Naive thymus-derived CD4-positive, alpha-beta T cell (primary cell): ENCODE measurements at regions of chr1 and their contacts with region 1.

Region 1: DNA sequence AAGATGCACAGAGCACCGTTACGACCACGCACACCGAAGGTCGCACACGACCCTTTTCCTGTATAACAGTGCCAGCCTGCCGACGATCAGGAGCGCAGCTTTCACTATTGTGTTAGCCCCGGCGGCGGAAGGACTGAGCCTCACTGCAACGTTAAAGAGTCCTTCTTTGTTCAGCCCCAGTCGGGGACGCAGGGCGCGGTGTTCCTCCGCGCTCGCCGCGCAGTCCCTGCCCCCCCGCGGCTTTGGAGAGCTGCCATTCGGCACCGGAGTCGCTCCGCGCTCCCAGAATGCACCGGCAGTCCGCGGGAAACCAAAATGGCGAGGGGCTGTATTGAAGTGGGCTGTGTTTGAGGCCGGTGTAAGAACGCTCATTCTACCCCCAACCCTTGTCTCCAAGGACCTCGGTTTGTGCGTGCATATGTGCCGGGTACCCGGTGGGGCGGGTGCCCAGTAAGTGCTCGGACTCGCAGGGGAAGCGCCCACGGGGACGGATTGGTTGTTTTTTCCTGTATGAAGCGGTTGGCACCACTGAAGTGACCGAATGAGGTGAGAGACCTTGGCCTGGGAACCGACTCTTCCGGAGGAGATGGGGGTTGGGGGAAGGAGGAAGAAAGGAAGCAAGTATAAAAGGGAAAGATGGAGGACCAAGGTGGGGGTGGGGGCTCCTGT is at the start of gene MTF2:
- DNase-seq: peak; percentile 84 to 92 (median 90)
- ATAC-seq: peak; percentile 96
- H3K4me3 ChIP-seq: peak within 1 kb of the TSS; percentile 88
- H3K4me3 Mint-ChIP-seq: peak within 1 kb of the TSS; percentile 94 to 99 (median 97)
- H3K27ac ChIP-seq: peak within 1 kb of the TSS; percentile 93
- H3K27ac Mint-ChIP-seq: peak within 1 kb of the TSS; percentile 88 to 99 (median 94)
- H3K4me1 ChIP-seq: peaks cover 10 to 22% of the 10 kb centered on the region in 2 donors
- H3K4me1 Mint-ChIP-seq: peaks cover 34 to 58% (median 50%) of the 10 kb centered on the region in 7 donors
- H3K27me3 ChIP-seq: no peaks in the 10 kb centered on the region
- H3K27me3 Mint-ChIP-seq: no peaks in the 10 kb centered on the region
- total RNA-seq, gene MTF2: 35.3 to 63.1 (median 47.1) TPM

Region 2: GRCh38 chr1:92831762-92832536 is 247.2 kb before region 1 on chr1 and contains the start of gene RPL5:
- CTCF ChIA-PET with region 1: no interaction called
- POLR2A ChIA-PET with region 1: interaction called, 7 read pairs
- intact Hi-C with region 1: loop called in 1 of 2 experiments (anchors 2 kb)
- DNase-seq: peak; percentile 94 to 99 (median 98)
- ATAC-seq: peak; percentile 95
- H3K4me3 ChIP-seq: peak within 1 kb of the TSS; percentile 94
- H3K4me3 Mint-ChIP-seq: peak within 1 kb of the TSS; percentile 94 to 100 (median 98)
- H3K27ac ChIP-seq: peak within 1 kb of the TSS; percentile 94
- H3K27ac Mint-ChIP-seq: peak within 1 kb of the TSS; percentile 98 to 100 (median 99)
- H3K4me1 ChIP-seq: peaks cover 16 to 30% of the 10 kb centered on the region in 2 donors
- H3K4me1 Mint-ChIP-seq: peaks cover 29 to 54% (median 44%) of the 10 kb centered on the region in 7 donors
- H3K27me3 ChIP-seq: no peaks in the 10 kb centered on the region
- H3K27me3 Mint-ChIP-seq: peaks cover 0 to 5% (median 0%) of the 10 kb centered on the region in 5 donors
- total RNA-seq, gene RPL5: 764 to 1,693 (median 1,596) TPM

Region 3: DNA sequence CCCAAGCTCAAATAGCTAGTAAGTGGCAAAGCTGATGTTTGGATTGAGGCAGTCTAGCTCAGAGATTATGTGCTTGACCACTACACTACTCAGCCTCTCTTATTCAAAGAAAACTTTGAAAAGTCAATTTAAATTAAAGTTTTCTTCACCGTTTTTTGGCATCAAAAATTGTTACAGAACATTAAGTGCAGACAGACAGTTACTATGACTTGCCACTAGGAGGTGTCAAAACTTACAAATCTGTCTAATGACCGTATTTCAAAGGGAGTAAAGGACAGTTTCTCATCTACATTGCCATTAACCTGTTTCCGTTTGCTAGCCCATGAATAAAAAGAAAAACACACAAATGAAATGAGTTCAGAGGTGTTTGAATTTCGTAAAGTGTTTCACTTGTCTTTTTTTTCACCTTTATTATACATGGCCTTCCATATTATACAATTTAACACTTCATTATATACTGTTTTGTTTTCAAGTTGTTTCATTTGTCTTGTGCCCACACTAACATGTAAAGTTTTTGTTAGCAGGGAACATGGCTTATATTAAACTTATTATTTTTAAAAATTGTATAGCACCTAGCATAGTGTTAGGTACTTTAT is 57.5 kb before region 1 on chr1:
- CTCF ChIA-PET with region 1: interaction called, 3 read pairs
- POLR2A ChIA-PET with region 1: no interaction called
- intact Hi-C with region 1: loop called (anchors 1 kb)
- DNase-seq: peak in 7 of 9 donors; percentile 16 to 64 (median 55)
- ATAC-seq: peak; percentile 78
- H3K4me3 ChIP-seq: no peak overlapping the region
- H3K4me3 Mint-ChIP-seq: no peak overlapping the region
- H3K27ac ChIP-seq: no peak overlapping the region
- H3K27ac Mint-ChIP-seq: no peak overlapping the region
- H3K4me1 ChIP-seq: peaks cover 0 to 4% of the 10 kb centered on the region in 2 donors
- H3K4me1 Mint-ChIP-seq: peaks cover 0 to 7% (median 5%) of the 10 kb centered on the region in 7 donors
- H3K27me3 ChIP-seq: no peaks in the 10 kb centered on the region
- H3K27me3 Mint-ChIP-seq: peaks cover 0 to 48% (median 3%) of the 10 kb centered on the region in 5 donors

Region 4: DNA sequence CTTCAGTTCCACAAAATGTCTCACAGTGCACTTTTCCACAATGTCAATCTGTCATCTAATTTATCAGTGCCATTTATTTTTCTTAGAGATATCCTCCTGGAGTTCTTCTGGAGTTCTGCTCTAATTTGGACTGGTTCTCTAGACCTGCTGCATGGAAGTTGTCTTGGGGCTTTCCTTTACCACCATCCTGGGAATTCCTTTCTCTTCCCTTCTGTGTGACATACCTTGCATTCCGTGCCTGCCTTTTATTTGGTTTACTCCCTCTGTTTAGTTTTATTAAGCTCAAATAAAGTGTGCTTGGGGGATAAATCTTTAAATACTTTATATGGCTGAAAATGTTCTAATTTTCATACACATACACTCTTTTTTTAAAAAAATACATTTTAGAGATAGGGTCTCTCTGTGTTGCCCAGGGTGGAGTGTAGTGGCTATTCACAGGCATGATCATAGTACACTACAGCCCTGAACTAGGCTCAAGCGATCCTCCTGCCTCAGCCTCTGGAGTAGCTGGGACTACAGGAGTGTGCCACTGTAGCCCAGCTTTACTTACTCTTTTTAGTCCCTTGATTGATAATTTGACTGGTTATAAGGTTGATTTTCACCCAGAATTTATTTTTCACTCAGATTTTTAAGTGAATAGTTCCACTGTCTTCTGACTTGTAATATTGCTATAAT is 14.3 kb after region 1 on chr1:
- CTCF ChIA-PET with region 1: interaction called, 4 read pairs
- POLR2A ChIA-PET with region 1: interaction called, 3 read pairs
- intact Hi-C with region 1: loop called in 1 of 2 experiments (anchors 1 kb)
- DNase-seq: no peak
- ATAC-seq: no peak
- H3K4me3 ChIP-seq: no peak overlapping the region
- H3K4me3 Mint-ChIP-seq: peak overlapping the region in 8 of 10 donors; percentile 23 to 51 (median 33)
- H3K27ac ChIP-seq: no peak overlapping the region
- H3K27ac Mint-ChIP-seq: peak overlapping the region in 7 of 9 donors; percentile 27 to 88 (median 65)
- H3K4me1 ChIP-seq: peaks cover 8 to 21% of the 10 kb centered on the region in 2 donors
- H3K4me1 Mint-ChIP-seq: peaks cover 36 to 84% (median 74%) of the 10 kb centered on the region in 7 donors
- H3K27me3 ChIP-seq: no peaks in the 10 kb centered on the region
- H3K27me3 Mint-ChIP-seq: no peaks in the 10 kb centered on the region

Region 5: GRCh38 chr1:93179886-93180722 is 101.0 kb after region 1 on chr1 and contains the start of gene TMED5:
- CTCF ChIA-PET with region 1: interaction called, 3 read pairs
- POLR2A ChIA-PET with region 1: interaction called, 5 read pairs
- intact Hi-C with region 1: loop called (anchors 1 kb)
- DNase-seq: peak; percentile 94 to 97 (median 96)
- ATAC-seq: peak; percentile 89
- H3K4me3 ChIP-seq: peak within 1 kb of the TSS; percentile 95
- H3K4me3 Mint-ChIP-seq: peak within 1 kb of the TSS; percentile 91 to 98 (median 94)
- H3K27ac ChIP-seq: peak within 1 kb of the TSS; percentile 91
- H3K27ac Mint-ChIP-seq: peak within 1 kb of the TSS; percentile 86 to 99 (median 97)
- H3K4me1 ChIP-seq: peaks cover 24 to 30% of the 10 kb centered on the region in 2 donors
- H3K4me1 Mint-ChIP-seq: peaks cover 30 to 59% (median 47%) of the 10 kb centered on the region in 7 donors
- H3K27me3 ChIP-seq: no peaks in the 10 kb centered on the region
- H3K27me3 Mint-ChIP-seq: no peaks in the 10 kb centered on the region
- total RNA-seq, gene TMED5: 37.8 to 60.0 (median 47.4) TPM

Region 6: DNA sequence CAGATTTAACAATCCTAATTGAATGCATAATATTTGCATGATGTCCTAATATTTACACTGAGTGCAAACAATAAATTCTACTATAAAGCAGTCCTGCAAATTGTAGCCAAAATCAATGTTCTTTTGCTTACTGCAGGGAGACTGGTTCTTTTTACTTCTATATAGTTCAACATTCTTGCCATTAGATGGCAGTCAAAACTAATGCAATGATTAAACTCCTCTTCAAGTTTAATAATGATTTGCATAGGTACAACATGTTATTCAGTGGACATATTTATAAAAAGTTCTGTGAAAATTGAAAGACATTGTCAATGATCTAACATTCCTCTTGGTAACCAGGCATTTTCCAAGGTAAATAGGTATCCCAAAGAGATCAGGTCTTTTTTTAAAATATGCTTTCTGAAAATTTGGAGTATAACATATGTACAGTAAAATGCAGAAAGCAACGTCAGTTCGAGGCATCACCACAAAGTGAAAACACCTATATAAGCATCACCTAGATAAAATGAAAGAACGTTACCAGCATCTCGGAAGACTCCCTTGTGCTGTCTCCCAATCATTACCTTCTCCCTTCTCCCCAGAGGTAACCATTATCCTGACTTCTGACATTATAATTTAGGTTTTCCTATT is 359.0 kb after region 1 on chr1:
- CTCF ChIA-PET with region 1: no interaction called
- POLR2A ChIA-PET with region 1: no interaction called
- intact Hi-C with region 1: loop called in 1 of 2 experiments (anchors 5 kb)
- DNase-seq: peak in 5 of 9 donors; percentile 24 to 48 (median 27)
- ATAC-seq: peak; percentile 61
- H3K4me3 ChIP-seq: no peak overlapping the region
- H3K4me3 Mint-ChIP-seq: no peak overlapping the region
- H3K27ac ChIP-seq: no peak overlapping the region
- H3K27ac Mint-ChIP-seq: no peak overlapping the region
- H3K4me1 ChIP-seq: no peaks in the 10 kb centered on the region
- H3K4me1 Mint-ChIP-seq: peaks cover 0 to 2% (median 0%) of the 10 kb centered on the region in 7 donors
- H3K27me3 ChIP-seq: peaks cover 0 to 4% of the 10 kb centered on the region in 2 donors
- H3K27me3 Mint-ChIP-seq: peaks cover 0 to 35% (median 7%) of the 10 kb centered on the region in 5 donors

Region 7: GRCh38 chr1:93909146-93910050 is 830.3 kb after region 1 on chr1 and contains the start of gene GCLM:
- CTCF ChIA-PET with region 1: no interaction called
- POLR2A ChIA-PET with region 1: no interaction called
- intact Hi-C with region 1: loop called in 1 of 2 experiments (anchors 2 kb)
- DNase-seq: peak; percentile 81 to 97 (median 88)
- ATAC-seq: peak; percentile 98
- H3K4me3 ChIP-seq: peak within 1 kb of the TSS; percentile 61
- H3K4me3 Mint-ChIP-seq: peak within 1 kb of the TSS; percentile 86 to 99 (median 90)
- H3K27ac ChIP-seq: peak within 1 kb of the TSS; percentile 73
- H3K27ac Mint-ChIP-seq: peak within 1 kb of the TSS; percentile 60 to 94 (median 90)
- H3K4me1 ChIP-seq: peaks cover 9 to 13% of the 10 kb centered on the region in 2 donors
- H3K4me1 Mint-ChIP-seq: peaks cover 19 to 38% (median 33%) of the 10 kb centered on the region in 7 donors
- H3K27me3 ChIP-seq: no peaks in the 10 kb centered on the region
- H3K27me3 Mint-ChIP-seq: peaks cover 0 to 30% (median 0%) of the 10 kb centered on the region in 5 donors
- total RNA-seq, gene GCLM: 6.4 to 23.8 (median 11.5) TPM